ENCODE measurements at regions of chr21 and their contacts with region 1.

Region 1: DNA sequence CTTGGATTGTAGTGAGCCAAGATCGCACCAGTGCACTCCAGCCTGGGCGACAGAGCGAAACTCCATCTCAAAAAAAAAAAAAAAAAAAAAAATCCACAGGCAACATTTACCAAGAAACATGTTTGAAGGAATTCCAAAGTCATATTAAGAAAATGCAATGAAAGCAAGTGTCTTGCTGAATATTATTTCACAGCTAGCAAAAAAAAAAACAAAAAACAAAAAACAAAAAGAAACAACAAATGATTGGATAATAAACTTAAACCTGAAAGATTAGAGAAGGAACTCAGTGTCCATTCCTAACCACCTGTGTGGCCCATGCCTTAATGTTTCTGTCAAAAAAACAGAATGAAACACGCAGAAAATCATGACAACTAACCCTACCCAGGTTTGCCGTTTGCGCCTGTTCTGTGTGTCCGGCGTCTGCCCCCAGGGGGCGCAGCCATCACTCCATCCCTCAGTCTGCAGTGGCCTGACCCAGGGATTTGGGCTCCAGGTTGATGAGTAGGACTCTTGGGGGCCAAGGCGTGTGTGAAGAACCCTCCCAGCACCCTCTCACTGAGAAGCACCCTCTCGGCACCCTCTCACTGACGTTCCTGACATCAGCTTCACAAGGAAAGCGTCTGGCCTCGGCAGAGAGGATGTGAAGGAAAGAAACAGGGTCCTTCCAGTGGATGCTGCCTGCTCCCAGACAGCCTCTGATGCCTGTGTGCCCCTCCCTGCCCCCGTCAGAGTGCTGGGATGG is 19.2 kb upstream of the PTTG1IP start:
- DNase-seq: peak; percentile 85
- ATAC-seq: peak; percentile 79
- H3K4me3 Mint-ChIP-seq: no peak overlapping the region
- H3K27ac Mint-ChIP-seq: peak overlapping the region; percentile 67
- H3K4me1 Mint-ChIP-seq: peaks cover 7% of the 10 kb centered on the region
- H3K27me3 Mint-ChIP-seq: no peaks in the 10 kb centered on the region

Region 2: GRCh38 chr21:44911389-44912157 is 18.9 kb after region 1 on chr21:
- POLR2A ChIA-PET with region 1: interaction called, 12 read pairs
- DNase-seq: peak; percentile 79
- ATAC-seq: peak; percentile 61
- H3K4me3 Mint-ChIP-seq: peak overlapping the region; percentile 83
- H3K27ac Mint-ChIP-seq: peak overlapping the region; percentile 97
- H3K4me1 Mint-ChIP-seq: peaks cover 38% of the 10 kb centered on the region
- H3K27me3 Mint-ChIP-seq: no peaks in the 10 kb centered on the region

Region 3: GRCh38 chr21:44940116-44940631 is 47.5 kb after region 1 on chr21:
- POLR2A ChIA-PET with region 1: no interaction called
- DNase-seq: no peak
- ATAC-seq: peak; percentile 43
- H3K4me3 Mint-ChIP-seq: peak overlapping the region; percentile 88
- H3K27ac Mint-ChIP-seq: peak overlapping the region; percentile 82
- H3K4me1 Mint-ChIP-seq: peaks cover 36% of the 10 kb centered on the region
- H3K27me3 Mint-ChIP-seq: no peaks in the 10 kb centered on the region